K562 (cell line): ENCODE measurements at regions of chr18 and their contacts with region 1.

Region 1: GRCh38 chr18:7038330-7038851 is 79.2 kb downstream of the LAMA1 start:
- DNase-seq: peak; percentile 52 to 73 (median 56)
- ATAC-seq: peak; percentile 99
- H3K4me3 ChIP-seq: no peak overlapping the region
- H3K27ac ChIP-seq: no peak overlapping the region
- H3K4me1 ChIP-seq: no peaks in the 10 kb centered on the region
- H3K27me3 ChIP-seq: no peaks in the 10 kb centered on the region; a peak in 2 of 5 replicates
- CTCF ChIP-seq: peak; percentile 73 to 88 (median 76)
- EP300 ChIP-seq: no peak
- POLR2A ChIP-seq: no peak
- RAD21 ChIP-seq: peak; percentile 28 to 73; a peak in 2 of 4 replicates

Region 2: GRCh38 chr18:5738526-5738925 is 1299.9 kb before region 1 on chr18:
- CTCF ChIA-PET with region 1: no interaction called
- POLR2A ChIA-PET with region 1: no interaction called
- in situ Hi-C with region 1: no loop called
- intact Hi-C with region 1: no loop called
- DNase-seq: peak in 1 of 4 experiments; percentile 25
- ATAC-seq: no peak
- H3K4me3 ChIP-seq: no peak overlapping the region
- H3K27ac ChIP-seq: no peak overlapping the region
- H3K4me1 ChIP-seq: no peaks in the 10 kb centered on the region
- H3K27me3 ChIP-seq: no peaks in the 10 kb centered on the region
- CTCF ChIP-seq: no peak
- EP300 ChIP-seq: no peak
- POLR2A ChIP-seq: no peak
- RAD21 ChIP-seq: no peak

Region 3: GRCh38 chr18:6764382-6764781 is 274.0 kb before region 1 on chr18:
- CTCF ChIA-PET with region 1: no interaction called
- POLR2A ChIA-PET with region 1: no interaction called
- in situ Hi-C with region 1: no loop called
- intact Hi-C with region 1: no loop called
- DNase-seq: no peak
- ATAC-seq: peak; percentile 50; the same call in 2 of the 3 replicates
- H3K4me3 ChIP-seq: no peak overlapping the region
- H3K27ac ChIP-seq: no peak overlapping the region
- H3K4me1 ChIP-seq: no peaks in the 10 kb centered on the region
- H3K27me3 ChIP-seq: peaks cover 0 to 4% of the 10 kb centered on the region in 2 experiments; a peak in 3 of 5 replicates
- CTCF ChIP-seq: no peak
- EP300 ChIP-seq: no peak
- POLR2A ChIP-seq: no peak
- RAD21 ChIP-seq: no peak

Region 4: DNA sequence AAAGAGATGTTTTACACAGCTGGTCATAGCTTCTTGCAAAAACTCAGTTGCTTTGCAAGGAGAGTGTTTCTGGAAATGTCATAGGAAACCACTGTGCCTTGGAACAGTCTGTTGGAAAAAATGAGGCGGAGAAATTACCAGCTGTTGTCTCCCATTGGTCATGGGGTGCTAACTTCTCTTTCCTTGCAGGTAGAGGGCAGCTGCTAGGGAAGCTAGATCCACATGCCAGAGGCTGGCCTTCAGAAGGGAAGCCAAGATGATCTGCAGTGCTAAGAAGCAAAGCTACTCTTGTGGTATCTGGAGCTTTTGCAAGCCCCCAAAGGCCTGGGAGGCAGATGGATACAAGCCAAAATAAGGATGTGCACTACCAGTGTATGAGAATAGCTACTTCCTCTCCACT is 114.0 kb after region 1 on chr18:
- CTCF ChIA-PET with region 1: no interaction called
- POLR2A ChIA-PET with region 1: no interaction called
- in situ Hi-C with region 1: loop called (anchors 5 kb)
- intact Hi-C with region 1: no loop called
- DNase-seq: no peak
- ATAC-seq: no peak
- H3K4me3 ChIP-seq: no peak overlapping the region
- H3K27ac ChIP-seq: no peak overlapping the region
- H3K4me1 ChIP-seq: no peaks in the 10 kb centered on the region
- H3K27me3 ChIP-seq: peaks cover 0 to 2% of the 10 kb centered on the region in 2 experiments; a peak in 1 of 5 replicates
- CTCF ChIP-seq: no peak
- EP300 ChIP-seq: no peak
- POLR2A ChIP-seq: no peak
- RAD21 ChIP-seq: no peak

Region 5: DNA sequence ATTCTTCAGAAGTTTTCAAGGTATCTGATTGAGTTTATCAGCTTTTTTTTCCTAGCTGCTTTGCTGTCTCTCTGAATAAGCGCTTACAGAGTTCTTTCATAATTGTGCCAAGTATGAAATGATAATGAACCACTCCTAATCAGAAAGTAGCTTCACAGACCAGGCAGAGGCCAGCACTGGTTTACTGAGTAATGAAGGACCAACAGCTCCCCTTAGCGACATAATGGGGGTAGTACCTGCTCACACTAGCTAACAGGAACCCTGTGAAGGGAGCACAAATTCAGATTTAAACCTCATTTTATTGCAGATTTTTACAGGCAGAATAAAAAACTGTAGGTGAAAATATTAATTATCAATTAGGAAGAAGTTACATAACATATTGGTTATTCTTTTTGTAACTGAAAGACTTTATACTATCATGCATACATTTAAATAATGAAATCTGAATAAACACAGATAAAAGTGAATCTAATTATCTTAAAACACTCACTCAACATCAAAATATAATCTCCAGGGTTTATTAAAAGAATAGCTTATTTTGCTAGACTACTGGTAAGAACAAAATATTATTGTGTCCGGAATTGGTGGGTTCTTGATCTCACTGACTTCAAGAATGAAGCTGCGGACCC is 138.8 kb after region 1 on chr18:
- CTCF ChIA-PET with region 1: interaction called, 3 read pairs
- POLR2A ChIA-PET with region 1: no interaction called
- in situ Hi-C with region 1: no loop called
- intact Hi-C with region 1: loop called (anchors 1 kb)
- DNase-seq: peak; percentile 63 to 73 (median 68)
- ATAC-seq: peak; percentile 97
- H3K4me3 ChIP-seq: no peak overlapping the region
- H3K27ac ChIP-seq: no peak overlapping the region
- H3K4me1 ChIP-seq: no peaks in the 10 kb centered on the region
- H3K27me3 ChIP-seq: peaks cover 9 to 28% of the 10 kb centered on the region in 2 experiments; a peak in 3 of 5 replicates
- CTCF ChIP-seq: peak; percentile 69 to 77 (median 70)
- EP300 ChIP-seq: no peak
- POLR2A ChIP-seq: no peak
- RAD21 ChIP-seq: peak; percentile 67 to 76

Region 6: DNA sequence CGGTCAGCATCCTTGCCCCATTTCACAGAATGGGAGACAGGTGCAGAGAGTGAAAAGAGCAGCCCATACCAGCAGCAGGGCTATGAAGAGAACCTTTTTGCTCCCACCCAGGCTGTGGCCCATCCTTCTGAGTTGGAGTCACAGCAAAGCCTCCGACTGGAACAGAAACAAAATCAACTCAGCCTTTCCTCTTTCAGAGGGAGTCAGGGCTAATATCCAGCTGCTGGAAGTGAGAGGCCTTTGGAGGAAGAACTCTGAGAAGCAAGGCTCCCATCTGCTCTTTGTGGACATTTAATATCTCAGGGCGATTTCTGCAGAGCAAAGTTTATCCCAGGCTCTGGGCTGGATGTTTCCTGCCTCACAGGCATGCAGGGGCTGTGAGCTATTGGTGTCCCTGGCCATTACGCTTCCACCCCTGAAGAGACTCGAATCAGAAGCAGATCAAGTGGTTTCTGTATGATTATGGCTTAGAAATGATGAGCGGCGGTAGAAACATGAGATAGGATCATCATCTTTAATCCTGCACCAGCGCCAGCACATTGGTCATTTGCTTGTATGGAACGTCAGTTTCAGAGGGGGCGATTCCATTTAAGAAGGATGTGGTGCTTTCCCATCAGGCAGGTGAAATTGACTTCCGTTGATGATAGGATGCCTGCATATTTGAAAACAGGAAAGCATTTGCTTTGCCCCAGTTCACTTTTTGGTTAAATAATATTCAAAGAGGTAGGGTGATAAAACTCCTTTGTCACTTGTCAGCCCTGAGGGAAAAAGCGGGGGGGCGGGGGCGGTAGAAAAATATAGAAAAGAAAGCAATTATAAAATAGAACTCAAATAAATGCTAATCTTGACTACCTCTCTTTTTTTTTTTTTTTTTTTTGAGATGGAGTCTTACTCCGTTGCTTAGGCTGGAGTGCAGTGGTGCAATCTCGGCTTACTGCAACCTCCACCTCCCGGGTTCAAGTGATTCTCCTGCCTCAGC is 344.9 kb after region 1 on chr18:
- CTCF ChIA-PET with region 1: no interaction called
- POLR2A ChIA-PET with region 1: no interaction called
- in situ Hi-C with region 1: no loop called
- intact Hi-C with region 1: no loop called
- DNase-seq: no peak
- ATAC-seq: no peak
- H3K4me3 ChIP-seq: no peak overlapping the region
- H3K27ac ChIP-seq: no peak overlapping the region
- H3K4me1 ChIP-seq: no peaks in the 10 kb centered on the region
- H3K27me3 ChIP-seq: no peaks in the 10 kb centered on the region
- CTCF ChIP-seq: no peak
- EP300 ChIP-seq: no peak
- POLR2A ChIP-seq: no peak
- RAD21 ChIP-seq: no peak

Region 7: DNA sequence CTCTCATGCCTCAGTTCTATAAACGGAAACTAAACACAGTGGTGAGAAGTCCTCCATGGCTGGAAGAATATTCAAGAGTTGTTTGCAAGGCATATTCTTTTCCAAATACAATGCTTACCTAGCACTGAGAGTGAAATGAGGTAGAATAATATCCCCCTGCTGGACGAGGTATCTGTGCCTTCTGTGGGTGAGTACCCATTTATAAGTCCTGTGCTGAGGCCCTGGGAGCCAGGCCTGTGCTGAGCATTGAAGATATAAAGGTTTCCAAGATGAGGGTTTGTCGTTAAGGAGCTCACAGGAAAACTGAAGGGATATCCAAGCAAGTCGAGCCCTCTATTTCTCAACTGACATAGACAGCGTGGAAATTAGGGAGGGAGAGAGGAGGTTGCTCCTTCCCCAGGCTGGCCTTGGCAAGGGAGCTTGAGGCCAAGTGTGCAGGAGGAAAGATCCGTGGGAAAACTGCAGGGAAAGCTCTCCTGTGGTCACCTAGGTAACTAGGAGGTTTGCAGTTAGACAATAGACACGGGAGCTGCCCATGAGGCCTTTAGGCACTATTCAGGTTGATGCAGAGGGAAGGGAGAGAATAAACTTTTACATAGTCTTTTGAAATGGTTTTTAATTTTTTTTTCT is 546.4 kb after region 1 on chr18:
- CTCF ChIA-PET with region 1: no interaction called
- POLR2A ChIA-PET with region 1: no interaction called
- in situ Hi-C with region 1: no loop called
- intact Hi-C with region 1: no loop called
- DNase-seq: no peak
- ATAC-seq: no peak
- H3K4me3 ChIP-seq: no peak overlapping the region
- H3K27ac ChIP-seq: no peak overlapping the region
- H3K4me1 ChIP-seq: no peaks in the 10 kb centered on the region
- H3K27me3 ChIP-seq: no peaks in the 10 kb centered on the region; a peak in 1 of 5 replicates
- CTCF ChIP-seq: no peak
- EP300 ChIP-seq: no peak
- POLR2A ChIP-seq: no peak
- RAD21 ChIP-seq: no peak